ENCODE measurements at regions of chr17 and their contacts with region 1.

Region 1: DNA sequence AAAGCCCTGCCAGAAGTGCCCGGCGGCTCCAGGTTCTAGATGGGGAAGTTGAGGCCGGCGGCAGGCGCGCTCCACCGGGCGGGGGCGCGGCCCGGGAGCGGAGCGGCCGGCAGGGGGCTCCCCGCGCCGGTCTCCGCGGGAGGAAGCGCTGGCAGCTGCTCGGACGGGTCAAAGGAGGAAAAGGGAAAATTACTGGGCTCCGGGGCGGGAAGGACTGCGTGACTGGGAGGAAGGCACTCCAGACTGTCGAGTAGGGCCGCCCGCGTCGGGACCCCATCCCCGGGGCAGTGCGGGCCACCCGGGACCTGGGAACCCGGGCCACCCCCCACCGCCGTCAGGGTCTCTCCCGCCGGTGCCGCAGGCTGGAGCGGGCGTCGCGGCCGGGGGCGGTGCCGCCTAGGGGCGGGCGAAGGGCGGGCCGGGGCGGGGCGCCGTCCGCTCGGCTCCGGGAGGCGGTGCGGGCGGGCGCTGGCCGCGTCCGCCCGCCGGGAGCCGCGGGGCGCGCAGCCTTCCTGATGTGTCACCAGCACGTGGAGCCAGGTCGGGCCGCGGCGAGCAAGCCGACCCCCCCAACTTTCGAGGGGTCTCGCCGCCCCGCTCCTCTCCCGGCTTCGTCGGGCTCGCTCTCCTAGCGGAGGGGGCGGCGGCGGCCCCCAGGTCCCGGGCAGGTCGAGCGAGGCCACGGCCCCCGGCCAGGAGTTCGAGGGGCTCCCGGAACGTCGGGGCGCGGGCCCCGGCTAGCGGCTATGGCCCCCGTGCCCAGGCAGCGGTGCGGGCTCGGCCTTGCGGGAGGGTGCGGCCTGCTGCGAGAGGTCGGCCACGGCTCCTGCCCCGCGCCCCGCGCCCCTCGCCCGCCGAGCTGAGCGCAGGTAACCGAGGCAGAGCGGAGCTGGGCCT is 167.5 kb downstream of the RAB11FIP4 start:
- DNase-seq: peak; percentile 70
- H3K4me3 ChIP-seq: peak overlapping the region; percentile 39 to 53 (median 51)
- H3K27ac ChIP-seq: peak overlapping the region; percentile 17
- H3K4me1 ChIP-seq: peaks cover 8% of the 10 kb centered on the region
- H3K27me3 ChIP-seq: no peaks in the 10 kb centered on the region
- CTCF ChIP-seq: peak; percentile 36 to 67

Region 2: GRCh38 chr17:31499771-31500554 is 59.0 kb before region 1 on chr17:
- CTCF ChIA-PET with region 1: no interaction called
- dilution Hi-C with region 1: no loop called
- in situ Hi-C with region 1: no loop called
- intact Hi-C with region 1: no loop called
- DNase-seq: peak; percentile 87
- H3K4me3 ChIP-seq: peak overlapping the region in 2 of 3 experiments; percentile 21 to 30
- H3K27ac ChIP-seq: peak overlapping the region; percentile 15
- H3K4me1 ChIP-seq: peaks cover 14% of the 10 kb centered on the region
- H3K27me3 ChIP-seq: peaks cover 2% of the 10 kb centered on the region
- CTCF ChIP-seq: no peak

Region 3: DNA sequence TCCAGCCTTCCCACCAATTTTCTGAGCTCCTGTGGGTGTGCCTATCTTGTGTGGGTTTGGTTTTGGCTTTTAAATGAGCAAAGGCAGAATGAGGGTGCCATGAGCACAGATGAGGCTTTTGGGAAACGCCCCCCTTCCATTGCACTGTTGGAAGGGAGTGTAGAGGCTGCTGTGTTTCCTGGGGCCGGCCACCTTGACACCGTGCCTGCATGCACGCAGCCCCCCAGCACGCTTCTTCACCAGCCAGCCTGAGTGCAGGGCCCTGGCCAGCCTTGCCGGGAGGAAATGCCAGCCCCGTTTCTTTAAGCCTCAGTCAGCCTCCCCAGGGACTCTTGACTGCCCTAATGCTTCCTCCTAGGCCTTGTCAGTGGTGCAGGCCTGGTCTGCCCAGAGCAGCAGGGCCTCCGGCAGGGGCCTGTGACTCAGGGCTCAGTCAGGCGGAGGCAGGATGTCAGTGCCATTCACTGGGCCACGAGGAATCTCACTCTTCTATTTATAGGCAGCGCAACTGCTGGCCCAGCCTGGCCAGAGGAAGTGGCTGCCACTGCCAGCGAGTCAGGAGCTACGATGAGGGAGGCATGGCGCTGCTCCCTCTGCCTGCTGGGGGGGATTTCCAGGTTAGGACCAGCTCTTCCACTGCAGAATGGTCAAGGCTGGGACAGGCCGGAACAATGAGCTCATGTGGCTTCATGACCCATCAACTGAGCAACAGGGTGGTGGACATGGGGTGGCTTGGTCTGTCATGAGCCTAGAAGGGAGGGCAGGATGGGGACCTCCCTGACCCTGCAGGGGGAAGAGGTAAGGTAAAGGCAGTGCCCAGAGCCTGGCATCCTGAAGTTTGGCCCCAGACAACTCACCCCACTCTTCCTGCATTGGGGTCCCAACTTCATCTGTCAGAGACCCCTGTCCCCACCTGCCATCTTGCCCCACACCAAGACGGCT is 37.7 kb after region 1 on chr17:
- CTCF ChIA-PET with region 1: no interaction called
- dilution Hi-C with region 1: no loop called
- in situ Hi-C with region 1: no loop called
- intact Hi-C with region 1: loop called (anchors 2 kb)
- DNase-seq: peak; percentile 96
- H3K4me3 ChIP-seq: no peak overlapping the region
- H3K27ac ChIP-seq: peak overlapping the region; percentile 46
- H3K4me1 ChIP-seq: peaks cover 39% of the 10 kb centered on the region
- H3K27me3 ChIP-seq: no peaks in the 10 kb centered on the region
- CTCF ChIP-seq: no peak

Region 4: DNA sequence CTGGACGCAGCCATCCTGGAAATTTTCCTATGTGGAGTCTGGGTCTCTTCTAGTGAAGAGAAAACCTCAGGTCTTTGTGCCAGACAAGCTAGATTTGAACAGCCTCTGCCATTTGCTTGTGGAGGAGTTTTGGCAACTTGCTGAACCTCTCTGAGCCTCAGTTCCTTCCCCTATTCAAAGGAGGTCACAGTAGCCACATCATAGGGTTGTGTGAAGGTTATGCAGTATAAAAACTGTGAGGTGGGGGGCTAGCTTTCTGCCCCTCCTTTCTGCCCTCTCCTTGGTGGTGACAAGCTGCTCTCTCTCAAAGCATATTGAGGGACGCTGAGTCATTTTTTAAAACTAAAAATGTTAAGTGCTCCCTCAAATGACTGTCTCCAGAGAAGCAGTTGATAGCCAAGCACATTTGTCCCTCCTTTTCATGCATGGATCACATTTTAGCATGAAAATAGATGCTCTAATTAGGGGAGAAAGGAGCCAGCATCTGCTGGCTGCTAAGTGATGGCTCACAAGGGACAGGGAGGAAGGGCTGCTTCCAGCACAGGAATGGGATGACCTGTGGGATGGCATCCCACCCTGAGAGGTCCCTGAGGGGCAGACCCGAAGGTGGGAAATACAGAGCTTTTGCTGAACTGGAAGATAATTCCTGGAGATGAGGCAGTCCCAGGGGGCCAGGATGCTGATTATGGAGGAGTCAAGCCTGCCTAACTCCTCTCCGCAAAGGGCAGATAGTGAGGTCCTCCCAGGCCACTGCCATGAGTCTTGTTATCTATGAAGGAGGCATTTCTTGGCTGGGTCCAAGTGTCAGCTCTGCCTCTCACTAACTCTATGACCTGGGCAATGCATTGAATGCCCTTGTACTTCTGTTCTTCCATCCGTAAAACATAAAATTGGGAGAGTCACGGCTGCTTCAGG is 51.3 kb after region 1 on chr17:
- CTCF ChIA-PET with region 1: no interaction called
- dilution Hi-C with region 1: no loop called
- in situ Hi-C with region 1: no loop called
- intact Hi-C with region 1: no loop called
- DNase-seq: no peak
- H3K4me3 ChIP-seq: no peak overlapping the region
- H3K27ac ChIP-seq: no peak overlapping the region
- H3K4me1 ChIP-seq: peaks cover 3% of the 10 kb centered on the region
- H3K27me3 ChIP-seq: no peaks in the 10 kb centered on the region
- CTCF ChIP-seq: no peak

Region 5: GRCh38 chr17:31678431-31678830 is 119.4 kb after region 1 on chr17:
- CTCF ChIA-PET with region 1: no interaction called
- dilution Hi-C with region 1: no loop called
- in situ Hi-C with region 1: no loop called
- intact Hi-C with region 1: loop called (anchors 10 kb)
- DNase-seq: no peak
- H3K4me3 ChIP-seq: no peak overlapping the region
- H3K27ac ChIP-seq: no peak overlapping the region
- H3K4me1 ChIP-seq: peaks cover 23% of the 10 kb centered on the region
- H3K27me3 ChIP-seq: no peaks in the 10 kb centered on the region
- CTCF ChIP-seq: no peak

Region 6: GRCh38 chr17:31787857-31788570 is 229.0 kb after region 1 on chr17:
- CTCF ChIA-PET with region 1: no interaction called
- dilution Hi-C with region 1: no loop called
- in situ Hi-C with region 1: no loop called
- intact Hi-C with region 1: loop called (anchors 1 kb)
- DNase-seq: peak; percentile 98
- H3K4me3 ChIP-seq: no peak overlapping the region
- H3K27ac ChIP-seq: peak overlapping the region; percentile 86
- H3K4me1 ChIP-seq: peaks cover 19% of the 10 kb centered on the region
- H3K27me3 ChIP-seq: no peaks in the 10 kb centered on the region
- CTCF ChIP-seq: no peak

Region 7: GRCh38 chr17:31900877-31901276 is 341.9 kb after region 1 on chr17:
- CTCF ChIA-PET with region 1: no interaction called
- dilution Hi-C with region 1: no loop called
- in situ Hi-C with region 1: no loop called
- intact Hi-C with region 1: loop called (anchors 1 kb)
- DNase-seq: peak; percentile 38
- H3K4me3 ChIP-seq: peak overlapping the region; percentile 66 to 97 (median 83)
- H3K27ac ChIP-seq: peak overlapping the region; percentile 86
- H3K4me1 ChIP-seq: peaks cover 4% of the 10 kb centered on the region
- H3K27me3 ChIP-seq: no peaks in the 10 kb centered on the region
- CTCF ChIP-seq: no peak

Measured in mammary epithelial cell (primary cell).